Prostate gland (tissue), 2 donors: ENCODE measurements at regions of chr19 and their contacts with region 1.

Region 1: DNA sequence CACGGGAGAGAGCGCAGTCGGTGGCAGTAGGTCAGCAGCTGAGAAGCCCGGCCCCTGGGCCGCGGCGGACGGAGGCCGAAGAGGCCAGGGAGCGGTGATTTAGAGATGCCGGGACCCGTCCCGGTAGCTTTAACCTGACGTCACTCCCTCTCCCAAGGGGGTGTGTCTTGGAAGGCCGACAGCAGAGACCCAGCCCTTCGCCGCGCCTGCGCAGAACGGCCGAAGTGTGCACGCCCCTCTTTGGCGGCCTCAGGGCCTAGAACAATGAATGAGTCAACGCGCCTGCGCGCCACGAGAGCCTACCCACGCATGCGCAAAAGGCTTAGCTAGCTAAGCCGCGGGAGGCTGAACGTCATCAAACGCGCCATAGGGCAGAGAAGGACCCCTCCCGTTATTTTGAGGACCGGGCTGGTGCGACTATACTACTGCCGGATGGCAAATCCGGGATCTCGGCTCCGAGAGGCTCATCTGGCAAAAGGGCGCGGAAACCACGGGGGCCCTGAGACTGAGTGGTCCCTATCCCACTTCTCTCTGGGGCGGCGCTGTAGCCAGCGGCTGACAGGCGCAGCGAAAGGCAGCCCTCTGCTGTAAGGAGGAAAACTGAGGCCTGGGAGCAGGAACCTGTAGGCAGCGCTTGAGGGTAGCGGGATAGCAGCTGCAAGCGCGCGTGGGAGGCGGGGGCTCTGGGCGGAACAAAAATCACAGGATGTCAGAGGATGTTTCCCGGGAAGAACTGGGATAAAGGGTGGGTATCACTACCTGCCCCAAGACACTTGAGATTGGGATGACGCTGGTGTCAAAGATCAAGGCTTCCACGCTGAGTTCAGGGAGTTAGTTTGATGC is at the starts of genes IRGQ and ZNF576:
- DNase-seq: peak; percentile 100
- H3K4me3 ChIP-seq: peak within 1 kb of the TSS; percentile 32 to 59
- H3K27ac ChIP-seq: peak within 1 kb of the TSS; percentile 94 to 97
- H3K4me1 ChIP-seq: peaks cover 28% of the 10 kb centered on the region
- H3K27me3 ChIP-seq: no peaks in the 10 kb centered on the region
- CTCF ChIP-seq: peak in 1 of 4 experiments; percentile 26
- POLR2A ChIP-seq: peak; percentile 96
- total RNA-seq, gene IRGQ: 28.3 to 30.4 TPM
- total RNA-seq, gene ZNF576: 25.1 to 30.6 TPM

Region 2: GRCh38 chr19:43575156-43575950 is 20.9 kb before region 1 on chr19 and contains the starts of genes PINLYP and XRCC1:
- intact Hi-C with region 1: loop called (anchors 1 kb)
- DNase-seq: peak; percentile 97
- H3K4me3 ChIP-seq: peak within 1 kb of the TSS; percentile 65 to 71
- H3K27ac ChIP-seq: peak within 1 kb of the TSS; percentile 75 to 77
- H3K4me1 ChIP-seq: no peaks in the 10 kb centered on the region
- H3K27me3 ChIP-seq: no peaks in the 10 kb centered on the region
- CTCF ChIP-seq: no peak
- POLR2A ChIP-seq: peak; percentile 63
- total RNA-seq, gene PINLYP: 4.8 to 7.8 TPM
- total RNA-seq, gene XRCC1: 25.8 to 52.5 TPM